Caco-2 (cell line): ENCODE measurements at regions of chr4 and their contacts with region 1.

Region 1: GRCh38 chr4:13548984-13549546 is 4.8 kb upstream of the NKX3-2 start:
- DNase-seq: peak; percentile 83 to 88
- H3K4me3 ChIP-seq: peak overlapping the region; percentile 50
- H3K4me3 Mint-ChIP-seq: peak overlapping the region; percentile 80
- H3K27ac Mint-ChIP-seq: peak overlapping the region; percentile 64
- H3K4me1 ChIP-seq: no peaks in the 10 kb centered on the region
- H3K4me1 Mint-ChIP-seq: no peaks in the 10 kb centered on the region
- H3K27me3 ChIP-seq: no peaks in the 10 kb centered on the region
- H3K27me3 Mint-ChIP-seq: peaks cover 8% of the 10 kb centered on the region
- CTCF ChIP-seq: peak; percentile 83 to 91

Region 2: DNA sequence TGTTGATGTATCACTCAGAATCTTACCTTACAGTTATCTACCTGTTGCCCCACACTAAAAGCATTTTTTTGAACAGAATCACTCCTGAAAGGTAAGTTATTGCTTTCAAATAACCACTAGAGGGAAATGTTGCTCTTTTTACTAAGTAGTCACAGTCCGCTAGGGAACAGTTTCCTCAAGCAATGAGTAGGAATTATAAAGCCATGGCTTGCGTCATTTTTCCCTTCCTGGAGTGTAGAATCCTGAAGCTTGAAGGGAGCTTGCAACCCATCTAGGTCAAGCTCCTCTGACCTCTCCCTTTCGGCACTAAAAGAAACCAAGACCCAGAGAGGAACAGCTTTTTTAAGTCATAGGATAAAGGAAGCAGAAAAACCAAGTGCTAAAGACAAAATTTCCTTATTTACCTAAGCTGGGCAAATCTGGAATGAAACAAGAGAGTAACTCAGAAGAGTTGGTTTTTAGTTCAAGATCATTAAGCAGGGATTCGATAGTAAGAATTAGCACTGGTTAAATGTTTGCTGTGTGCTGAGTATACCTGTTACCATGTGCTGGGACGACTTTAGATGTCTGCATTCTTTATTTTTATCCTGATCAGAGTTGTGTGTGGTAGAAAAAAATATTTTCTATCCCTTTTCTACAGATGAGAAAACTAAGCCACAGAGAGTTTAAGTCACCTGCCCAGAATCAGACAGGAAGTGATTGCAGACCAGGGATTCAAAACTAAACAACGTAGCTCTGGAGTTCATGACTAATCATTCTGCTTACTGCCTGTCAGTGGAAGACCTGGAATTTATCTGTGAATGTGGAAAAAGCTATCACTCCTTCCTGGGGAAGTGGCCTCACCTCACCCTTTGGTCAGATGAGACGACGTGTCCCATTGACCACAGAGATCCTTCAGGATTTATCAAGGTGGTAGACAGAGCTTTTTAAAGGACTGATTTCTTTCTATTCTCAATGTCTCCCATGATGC is 696.4 kb before region 1 on chr4:
- CTCF ChIA-PET with region 1: interaction called, 3 read pairs
- POLR2A ChIA-PET with region 1: no interaction called
- intact Hi-C with region 1: loop called (anchors 1 kb)
- DNase-seq: peak in 1 of 2 experiments; percentile 43
- H3K4me3 ChIP-seq: no peak overlapping the region
- H3K4me3 Mint-ChIP-seq: no peak overlapping the region
- H3K27ac Mint-ChIP-seq: no peak overlapping the region
- H3K4me1 ChIP-seq: no peaks in the 10 kb centered on the region
- H3K4me1 Mint-ChIP-seq: no peaks in the 10 kb centered on the region
- H3K27me3 ChIP-seq: no peaks in the 10 kb centered on the region
- H3K27me3 Mint-ChIP-seq: peaks cover 4% of the 10 kb centered on the region
- CTCF ChIP-seq: peak; percentile 29 to 58

Region 3: DNA sequence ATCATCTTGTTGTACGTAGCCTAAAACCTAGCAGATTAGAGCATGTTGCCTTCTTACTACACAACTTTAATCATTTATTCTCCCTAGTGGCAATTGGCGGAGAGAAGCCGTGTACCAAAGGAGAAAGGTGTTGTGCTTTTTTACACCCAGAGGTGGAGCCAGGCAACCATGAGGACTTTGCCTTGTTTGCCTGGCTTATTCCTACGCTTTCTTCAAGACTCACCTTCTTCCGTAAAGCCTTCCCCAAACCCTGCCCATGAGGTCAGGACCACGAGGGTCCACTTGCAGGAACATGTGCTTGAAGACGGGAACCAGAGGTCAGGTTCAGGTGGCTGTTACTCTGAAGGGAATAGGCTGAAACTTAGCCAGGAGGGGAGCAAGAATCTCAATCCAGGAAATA is 355.4 kb before region 1 on chr4:
- CTCF ChIA-PET with region 1: no interaction called
- POLR2A ChIA-PET with region 1: no interaction called
- intact Hi-C with region 1: loop called (anchors 5 kb)
- DNase-seq: peak in 1 of 2 experiments; percentile 3
- H3K4me3 ChIP-seq: no peak overlapping the region
- H3K4me3 Mint-ChIP-seq: no peak overlapping the region
- H3K27ac Mint-ChIP-seq: no peak overlapping the region
- H3K4me1 ChIP-seq: no peaks in the 10 kb centered on the region
- H3K4me1 Mint-ChIP-seq: no peaks in the 10 kb centered on the region
- H3K27me3 ChIP-seq: no peaks in the 10 kb centered on the region
- H3K27me3 Mint-ChIP-seq: no peaks in the 10 kb centered on the region
- CTCF ChIP-seq: no peak

Region 4: GRCh38 chr4:13403833-13404232 is 145.2 kb before region 1 on chr4:
- CTCF ChIA-PET with region 1: no interaction called
- POLR2A ChIA-PET with region 1: no interaction called
- intact Hi-C with region 1: loop called (anchors 10 kb)
- DNase-seq: no peak
- H3K4me3 ChIP-seq: no peak overlapping the region
- H3K4me3 Mint-ChIP-seq: no peak overlapping the region
- H3K27ac Mint-ChIP-seq: no peak overlapping the region
- H3K4me1 ChIP-seq: no peaks in the 10 kb centered on the region
- H3K4me1 Mint-ChIP-seq: peaks cover 6% of the 10 kb centered on the region
- H3K27me3 ChIP-seq: no peaks in the 10 kb centered on the region
- H3K27me3 Mint-ChIP-seq: no peaks in the 10 kb centered on the region
- CTCF ChIP-seq: no peak

Region 5: DNA sequence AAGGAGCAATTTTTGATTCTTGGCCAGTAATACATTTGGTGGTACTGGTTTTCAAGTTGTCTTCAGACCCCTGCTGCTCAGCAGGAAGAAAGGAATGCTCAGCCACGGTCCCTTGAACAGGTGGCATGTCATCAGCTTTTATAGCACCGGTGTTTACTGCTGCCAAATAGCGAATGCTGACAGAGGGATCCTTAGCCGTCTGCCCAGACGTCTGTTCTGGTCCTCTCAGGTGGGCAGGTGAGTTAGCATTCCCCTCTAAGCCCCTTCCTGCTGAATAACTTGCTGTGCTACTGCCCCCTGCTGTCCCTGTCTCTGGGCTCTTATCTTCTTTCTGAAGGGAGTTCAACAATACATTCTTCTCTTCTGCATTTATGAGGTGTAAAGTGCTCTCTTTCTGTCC is 50.1 kb after region 1 on chr4:
- CTCF ChIA-PET with region 1: no interaction called
- POLR2A ChIA-PET with region 1: no interaction called
- intact Hi-C with region 1: loop called (anchors 2 kb)
- DNase-seq: peak in 1 of 2 experiments; percentile 18
- H3K4me3 ChIP-seq: no peak overlapping the region
- H3K4me3 Mint-ChIP-seq: no peak overlapping the region
- H3K27ac Mint-ChIP-seq: no peak overlapping the region
- H3K4me1 ChIP-seq: peaks cover 34% of the 10 kb centered on the region
- H3K4me1 Mint-ChIP-seq: peaks cover 10% of the 10 kb centered on the region
- H3K27me3 ChIP-seq: no peaks in the 10 kb centered on the region
- H3K27me3 Mint-ChIP-seq: no peaks in the 10 kb centered on the region
- CTCF ChIP-seq: peak; percentile 11 to 22